ENCODE measurements at regions of chr11 and their contacts with region 1.

Region 1: GRCh38 chr11:66545701-66546367 is at the start of gene ZDHHC24:
- DNase-seq: peak; percentile 57 to 93 (median 78)
- ATAC-seq: peak; percentile 81
- H3K4me3 ChIP-seq: peak within 1 kb of the TSS; percentile 68 to 97
- H3K4me3 Mint-ChIP-seq: peak within 1 kb of the TSS; percentile 84
- H3K27ac ChIP-seq: peak within 1 kb of the TSS; percentile 79 to 83
- H3K27ac Mint-ChIP-seq: peak within 1 kb of the TSS; percentile 92
- H3K4me1 ChIP-seq: peaks cover 31% of the 10 kb centered on the region
- H3K4me1 Mint-ChIP-seq: peaks cover 40% of the 10 kb centered on the region
- H3K27me3 ChIP-seq: no peaks in the 10 kb centered on the region
- H3K27me3 Mint-ChIP-seq: no peaks in the 10 kb centered on the region
- CTCF ChIP-seq: no peak
- total RNA-seq, gene ZDHHC24: 15.0 to 15.9 TPM

Region 2: DNA sequence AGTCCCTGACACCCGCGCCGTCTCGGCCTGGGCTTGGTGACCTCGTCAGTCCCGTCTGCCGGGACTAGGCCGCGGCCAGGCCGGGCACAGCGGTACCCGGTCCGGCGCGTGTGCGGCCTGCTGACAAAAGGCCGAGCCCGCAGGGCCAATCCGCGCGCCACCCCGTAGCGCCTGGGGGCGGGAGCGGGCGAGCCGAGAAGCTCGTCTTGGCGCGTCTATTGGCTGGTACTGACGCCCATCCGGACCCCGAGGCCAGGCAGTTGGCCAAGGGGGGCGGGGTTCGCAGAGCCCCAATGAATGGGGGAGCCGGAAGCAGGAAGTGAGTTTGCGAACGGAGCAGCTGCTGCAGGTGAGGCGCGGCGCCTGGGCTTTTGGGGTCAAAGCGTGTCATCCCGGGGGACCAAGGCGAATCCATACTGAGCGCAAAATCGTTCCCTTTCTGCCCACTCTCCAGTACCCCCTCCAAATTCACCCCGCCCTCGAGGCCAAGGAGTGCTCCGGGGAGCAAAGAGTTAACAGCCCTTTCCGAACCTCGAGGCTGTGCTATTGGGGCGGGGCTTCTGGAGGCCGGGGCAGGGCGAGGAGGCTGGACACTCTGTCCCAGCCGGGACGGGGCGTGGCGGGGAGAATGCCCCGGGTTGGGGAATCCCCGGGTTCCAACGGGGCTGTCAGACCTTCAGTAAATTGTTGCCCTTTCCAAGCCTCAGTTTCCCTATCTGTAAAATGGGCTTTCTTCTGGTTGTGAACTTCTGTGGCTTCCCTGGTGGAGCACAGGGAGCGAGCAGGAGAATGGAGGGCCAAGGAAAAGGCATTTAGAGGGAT is 65.5 kb before region 1 on chr11 and contains the start of gene DPP3:
- CTCF ChIA-PET with region 1: interaction called, 3 read pairs
- POLR2A ChIA-PET with region 1: interaction called, 3 read pairs
- intact Hi-C with region 1: loop called in 1 of 2 experiments (anchors 1 kb)
- DNase-seq: peak; percentile 91 to 97 (median 95)
- ATAC-seq: peak; percentile 98
- H3K4me3 ChIP-seq: peak within 1 kb of the TSS; percentile 90 to 93
- H3K4me3 Mint-ChIP-seq: peak within 1 kb of the TSS; percentile 89
- H3K27ac ChIP-seq: peak within 1 kb of the TSS; percentile 70 to 90
- H3K27ac Mint-ChIP-seq: peak within 1 kb of the TSS; percentile 89
- H3K4me1 ChIP-seq: peaks cover 17% of the 10 kb centered on the region
- H3K4me1 Mint-ChIP-seq: peaks cover 31% of the 10 kb centered on the region
- H3K27me3 ChIP-seq: no peaks in the 10 kb centered on the region
- H3K27me3 Mint-ChIP-seq: no peaks in the 10 kb centered on the region
- CTCF ChIP-seq: no peak
- total RNA-seq, gene DPP3: 13.7 to 15.6 TPM

Region 3: GRCh38 chr11:66510271-66510989 is 35.4 kb before region 1 on chr11 and contains the start of gene BBS1:
- CTCF ChIA-PET with region 1: no interaction called
- POLR2A ChIA-PET with region 1: interaction called, 5 read pairs
- intact Hi-C with region 1: loop called (anchors 1 to 2 kb)
- DNase-seq: peak; percentile 62 to 91 (median 84)
- ATAC-seq: peak; percentile 98
- H3K4me3 ChIP-seq: peak within 1 kb of the TSS; percentile 68 to 81
- H3K4me3 Mint-ChIP-seq: peak within 1 kb of the TSS; percentile 88
- H3K27ac ChIP-seq: peak within 1 kb of the TSS; percentile 57 to 62
- H3K27ac Mint-ChIP-seq: peak within 1 kb of the TSS; percentile 22
- H3K4me1 ChIP-seq: peaks cover 15% of the 10 kb centered on the region
- H3K4me1 Mint-ChIP-seq: peaks cover 13% of the 10 kb centered on the region
- H3K27me3 ChIP-seq: no peaks in the 10 kb centered on the region
- H3K27me3 Mint-ChIP-seq: no peaks in the 10 kb centered on the region
- CTCF ChIP-seq: no peak
- total RNA-seq, gene BBS1: 10.8 to 13.5 TPM

Region 4: DNA sequence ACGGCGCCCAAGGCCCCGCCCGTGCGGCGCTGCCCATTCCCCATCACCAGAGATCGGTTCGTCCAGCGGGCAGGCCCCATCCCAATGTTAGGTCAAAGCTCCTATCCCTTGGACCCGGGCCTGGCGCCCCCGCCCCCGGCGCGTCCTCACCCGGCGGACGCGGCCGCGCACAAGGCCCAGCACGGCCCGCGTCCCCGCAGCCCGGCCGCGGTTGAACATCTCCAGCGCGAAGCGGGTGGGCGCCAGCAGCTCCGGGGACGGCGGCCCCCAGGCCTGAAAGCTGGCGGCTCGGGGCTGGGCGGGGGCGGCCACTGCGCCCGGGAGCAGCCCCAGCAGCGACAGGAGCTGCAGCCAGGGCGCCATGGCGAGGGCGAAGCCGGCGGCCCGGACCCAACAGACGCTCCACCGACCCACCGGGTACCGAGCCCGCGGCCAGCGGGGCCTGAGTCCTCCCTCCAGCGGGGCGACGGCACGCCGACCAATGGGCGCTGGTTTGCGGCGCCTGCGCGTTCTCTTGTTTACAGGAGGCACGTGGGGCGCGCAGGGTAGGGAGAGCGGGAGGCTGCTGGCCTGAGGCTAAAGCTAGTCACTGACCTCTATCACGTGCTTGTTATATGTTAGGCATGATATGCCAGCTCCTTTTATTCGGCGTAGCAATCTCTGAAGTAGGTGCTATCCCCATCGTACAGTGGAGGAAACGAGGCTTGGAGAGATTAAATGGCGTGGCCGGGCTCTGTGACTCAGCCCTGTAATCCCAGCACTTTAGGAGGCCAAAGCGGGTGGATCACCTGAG is 22.5 kb after region 1 on chr11 and contains the start of gene CTSF:
- CTCF ChIA-PET with region 1: interaction called, 3 read pairs
- POLR2A ChIA-PET with region 1: interaction called, 10 read pairs
- intact Hi-C with region 1: no loop called
- DNase-seq: peak; percentile 35 to 85 (median 74)
- ATAC-seq: peak; percentile 95
- H3K4me3 ChIP-seq: peak within 1 kb of the TSS; percentile 46 to 74
- H3K4me3 Mint-ChIP-seq: peak within 1 kb of the TSS; percentile 82
- H3K27ac ChIP-seq: peak within 1 kb of the TSS in 1 of 2 experiments; percentile 17
- H3K27ac Mint-ChIP-seq: peak within 1 kb of the TSS; percentile 81
- H3K4me1 ChIP-seq: peaks cover 12% of the 10 kb centered on the region
- H3K4me1 Mint-ChIP-seq: peaks cover 10% of the 10 kb centered on the region
- H3K27me3 ChIP-seq: peaks cover 0 to 3% of the 10 kb centered on the region in 2 experiments
- H3K27me3 Mint-ChIP-seq: no peaks in the 10 kb centered on the region
- CTCF ChIP-seq: no peak
- total RNA-seq, gene CTSF: 13.1 to 14.1 TPM

Region 5: GRCh38 chr11:66744485-66745340 is 198.9 kb after region 1 on chr11:
- CTCF ChIA-PET with region 1: no interaction called
- POLR2A ChIA-PET with region 1: no interaction called
- intact Hi-C with region 1: loop called in 1 of 2 experiments (anchors 10 kb)
- DNase-seq: peak; percentile 76 to 93 (median 87)
- ATAC-seq: peak; percentile 87
- H3K4me3 ChIP-seq: peak overlapping the region; percentile 81 to 92
- H3K4me3 Mint-ChIP-seq: peak overlapping the region; percentile 90
- H3K27ac ChIP-seq: peak overlapping the region; percentile 49 to 71
- H3K27ac Mint-ChIP-seq: peak overlapping the region; percentile 75
- H3K4me1 ChIP-seq: peaks cover 5% of the 10 kb centered on the region
- H3K4me1 Mint-ChIP-seq: peaks cover 3% of the 10 kb centered on the region
- H3K27me3 ChIP-seq: no peaks in the 10 kb centered on the region
- H3K27me3 Mint-ChIP-seq: no peaks in the 10 kb centered on the region
- CTCF ChIP-seq: no peak